Naive thymus-derived CD4-positive, alpha-beta T cell (primary cell): ENCODE measurements at regions of chr17 and their contacts with region 1.

Region 1: DNA sequence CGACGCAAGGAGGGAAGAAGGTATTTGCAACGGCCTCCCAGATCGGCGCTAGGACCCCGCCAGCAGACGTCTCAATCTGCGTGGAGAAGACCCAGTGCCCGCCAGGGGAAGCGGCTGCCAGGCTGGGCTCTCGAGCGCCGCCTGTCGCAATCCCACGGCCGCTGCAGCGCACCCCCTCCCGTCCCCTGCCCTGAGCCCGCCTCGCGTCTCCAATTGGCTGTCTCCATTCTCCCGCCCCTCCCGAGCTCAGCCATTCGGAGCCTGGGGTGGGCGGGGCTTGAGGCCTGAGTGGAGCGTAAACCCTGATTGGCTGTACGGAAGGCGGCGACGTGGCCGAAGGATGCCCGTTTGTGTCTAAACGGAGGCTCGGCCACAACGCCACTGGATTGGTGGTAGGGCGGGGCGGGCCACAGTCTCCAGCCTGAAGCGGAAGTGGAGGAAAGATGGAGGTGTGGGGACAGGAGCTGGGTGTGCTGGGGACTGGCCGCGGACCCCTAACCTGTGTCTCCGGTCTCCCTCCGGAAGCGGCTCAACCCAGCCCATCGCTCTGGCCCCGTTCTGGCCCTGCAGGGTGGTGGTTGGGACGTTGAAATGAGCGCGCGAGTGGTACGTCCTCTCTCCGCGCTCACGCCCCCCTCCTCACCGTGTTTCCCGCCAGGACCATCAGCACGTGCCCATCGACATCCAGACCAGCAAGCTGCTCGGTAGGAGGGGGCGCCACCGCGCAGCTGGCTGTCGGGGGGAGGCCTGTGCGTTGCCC is at the start of gene CDK5RAP3:
- DNase-seq: peak; percentile 93 to 99 (median 97)
- ATAC-seq: peak; percentile 100
- H3K4me3 ChIP-seq: peak within 1 kb of the TSS; percentile 96
- H3K4me3 Mint-ChIP-seq: peak within 1 kb of the TSS; percentile 95 to 100 (median 99)
- H3K27ac ChIP-seq: peak within 1 kb of the TSS; percentile 71
- H3K27ac Mint-ChIP-seq: peak within 1 kb of the TSS; percentile 83 to 96 (median 93)
- H3K4me1 ChIP-seq: peaks cover 6 to 12% of the 10 kb centered on the region in 2 donors
- H3K4me1 Mint-ChIP-seq: peaks cover 14 to 41% (median 26%) of the 10 kb centered on the region in 7 donors
- H3K27me3 ChIP-seq: no peaks in the 10 kb centered on the region
- H3K27me3 Mint-ChIP-seq: no peaks in the 10 kb centered on the region
- total RNA-seq, gene CDK5RAP3: 238 to 349 (median 276) TPM

Region 2: GRCh38 chr17:47840740-47841603 is 129.9 kb before region 1 on chr17 and contains the start of gene SCRN2:
- CTCF ChIA-PET with region 1: interaction called, 6 read pairs
- POLR2A ChIA-PET with region 1: interaction called, 4 read pairs
- intact Hi-C with region 1: loop called (anchors 1 kb)
- DNase-seq: peak; percentile 71 to 94 (median 81)
- ATAC-seq: peak; percentile 94
- H3K4me3 ChIP-seq: peak within 1 kb of the TSS; percentile 95
- H3K4me3 Mint-ChIP-seq: peak within 1 kb of the TSS; percentile 84 to 99 (median 94)
- H3K27ac ChIP-seq: peak within 1 kb of the TSS; percentile 75
- H3K27ac Mint-ChIP-seq: peak within 1 kb of the TSS; percentile 55 to 93 (median 86)
- H3K4me1 ChIP-seq: peaks cover 19 to 21% of the 10 kb centered on the region in 2 donors
- H3K4me1 Mint-ChIP-seq: peaks cover 9 to 49% (median 38%) of the 10 kb centered on the region in 7 donors
- H3K27me3 ChIP-seq: peaks cover 0 to 7% of the 10 kb centered on the region in 2 donors
- H3K27me3 Mint-ChIP-seq: peaks cover 6 to 23% (median 18%) of the 10 kb centered on the region in 5 donors
- total RNA-seq, gene SCRN2: 33.4 to 55.9 (median 41.4) TPM

Region 3: DNA sequence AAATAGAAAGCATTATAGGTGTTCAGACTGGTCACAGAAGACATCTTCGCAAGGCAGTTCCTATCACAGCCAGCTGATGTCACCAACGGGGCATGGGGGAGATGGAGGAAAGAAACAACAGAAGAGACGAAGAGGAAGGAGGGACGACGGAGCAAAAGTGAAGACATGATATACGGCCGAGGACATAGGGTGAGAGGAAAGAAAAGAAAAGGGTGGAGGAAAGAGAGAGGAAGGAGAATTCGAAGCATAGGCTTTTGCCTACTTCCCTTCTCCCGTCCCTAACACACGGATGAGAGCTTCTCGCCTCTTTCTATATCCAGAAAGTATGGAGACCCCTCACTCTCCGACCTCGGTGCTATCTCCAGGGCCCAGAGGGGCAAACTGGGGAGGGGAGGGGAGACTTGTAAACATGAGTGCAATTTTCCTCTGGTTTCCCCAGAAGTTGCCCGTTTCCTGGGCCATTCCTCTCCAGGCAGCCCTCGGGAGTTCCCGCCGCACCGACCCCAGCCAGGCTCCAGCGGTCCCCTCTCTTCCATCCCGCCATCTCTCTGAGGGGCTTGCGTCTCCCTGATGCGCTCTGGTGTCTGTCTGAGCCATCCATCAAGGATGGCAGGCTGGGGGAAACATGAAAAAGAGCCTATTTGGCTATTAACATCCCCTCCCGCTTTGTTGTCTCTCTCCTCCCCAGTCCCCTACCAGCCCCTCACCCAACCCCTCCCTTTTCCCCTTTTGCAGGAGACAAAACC is 40.7 kb after region 1 on chr17:
- CTCF ChIA-PET with region 1: interaction called, 6 read pairs
- POLR2A ChIA-PET with region 1: no interaction called
- intact Hi-C with region 1: loop called in 1 of 2 experiments (anchors 5 kb)
- DNase-seq: peak in 7 of 9 donors; percentile 20 to 34 (median 32)
- ATAC-seq: peak; percentile 74
- H3K4me3 ChIP-seq: peak overlapping the region; percentile 47
- H3K4me3 Mint-ChIP-seq: peak overlapping the region; percentile 70 to 90 (median 78)
- H3K27ac ChIP-seq: no peak overlapping the region
- H3K27ac Mint-ChIP-seq: peak overlapping the region in 1 of 9 donors; percentile 48
- H3K4me1 ChIP-seq: peaks cover 9% of the 10 kb centered on the region in 2 donors
- H3K4me1 Mint-ChIP-seq: peaks cover 9 to 25% (median 13%) of the 10 kb centered on the region in 7 donors
- H3K27me3 ChIP-seq: peaks cover 7 to 10% of the 10 kb centered on the region in 2 donors
- H3K27me3 Mint-ChIP-seq: peaks cover 44 to 66% (median 55%) of the 10 kb centered on the region in 5 donors

Region 4: DNA sequence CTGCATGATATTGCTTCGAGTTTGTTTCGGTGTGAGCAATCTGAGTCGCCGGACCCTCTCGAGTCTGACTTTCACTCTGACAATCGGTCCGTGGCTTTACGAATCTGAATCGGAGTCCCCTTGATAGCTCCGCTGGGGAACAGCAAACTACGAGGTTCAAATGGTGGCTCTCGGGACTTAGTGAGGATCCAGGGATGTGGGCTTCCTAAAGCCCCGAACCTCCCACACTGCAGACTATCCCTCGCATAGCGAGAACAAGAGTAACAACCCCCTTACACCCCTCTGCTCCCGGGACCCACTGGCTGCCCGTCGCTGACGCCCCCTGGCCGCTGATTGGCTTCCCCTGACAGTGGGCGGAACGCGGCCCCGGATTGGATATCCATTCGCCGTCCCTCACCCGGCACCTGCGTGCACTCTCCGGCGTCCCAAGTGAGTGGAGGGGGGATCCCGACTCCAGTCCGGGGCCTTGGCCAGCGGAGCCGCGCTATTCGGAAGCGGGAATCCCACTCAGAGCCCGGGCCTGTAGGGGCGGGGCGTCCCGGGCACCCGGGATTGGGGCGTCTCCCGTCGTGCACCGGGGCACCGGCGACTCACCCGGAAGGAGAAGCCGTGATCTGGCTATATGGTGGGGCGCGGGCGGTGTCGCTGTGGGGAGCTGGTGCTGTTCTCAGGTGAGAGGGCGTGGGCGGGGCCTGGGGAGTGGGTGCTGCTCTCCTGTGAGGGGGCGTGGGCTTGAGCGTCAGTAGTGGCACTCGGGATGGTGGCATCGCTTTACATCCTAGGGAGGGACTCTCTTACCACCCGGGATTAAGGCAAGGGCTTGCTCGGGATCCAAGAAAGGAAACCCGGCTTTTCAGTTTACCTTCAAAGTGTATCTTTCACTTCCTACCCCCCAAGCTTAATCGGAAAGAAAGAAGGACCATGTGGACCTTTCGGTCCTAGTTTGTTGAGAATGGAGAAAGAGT is 136.6 kb after region 1 on chr17 and contains the start of gene SNX11:
- CTCF ChIA-PET with region 1: no interaction called
- POLR2A ChIA-PET with region 1: no interaction called
- intact Hi-C with region 1: loop called in 1 of 2 experiments (anchors 2 kb)
- DNase-seq: peak; percentile 85 to 97 (median 94)
- ATAC-seq: peak; percentile 96
- H3K4me3 ChIP-seq: peak within 1 kb of the TSS; percentile 97
- H3K4me3 Mint-ChIP-seq: peak within 1 kb of the TSS; percentile 92 to 99 (median 96)
- H3K27ac ChIP-seq: peak within 1 kb of the TSS; percentile 89
- H3K27ac Mint-ChIP-seq: peak within 1 kb of the TSS; percentile 89 to 96 (median 93)
- H3K4me1 ChIP-seq: peaks cover 19 to 20% of the 10 kb centered on the region in 2 donors
- H3K4me1 Mint-ChIP-seq: peaks cover 45 to 68% (median 62%) of the 10 kb centered on the region in 7 donors
- H3K27me3 ChIP-seq: no peaks in the 10 kb centered on the region
- H3K27me3 Mint-ChIP-seq: no peaks in the 10 kb centered on the region
- total RNA-seq, gene SNX11: 12.3 to 35.1 (median 16.7) TPM

Region 5: DNA sequence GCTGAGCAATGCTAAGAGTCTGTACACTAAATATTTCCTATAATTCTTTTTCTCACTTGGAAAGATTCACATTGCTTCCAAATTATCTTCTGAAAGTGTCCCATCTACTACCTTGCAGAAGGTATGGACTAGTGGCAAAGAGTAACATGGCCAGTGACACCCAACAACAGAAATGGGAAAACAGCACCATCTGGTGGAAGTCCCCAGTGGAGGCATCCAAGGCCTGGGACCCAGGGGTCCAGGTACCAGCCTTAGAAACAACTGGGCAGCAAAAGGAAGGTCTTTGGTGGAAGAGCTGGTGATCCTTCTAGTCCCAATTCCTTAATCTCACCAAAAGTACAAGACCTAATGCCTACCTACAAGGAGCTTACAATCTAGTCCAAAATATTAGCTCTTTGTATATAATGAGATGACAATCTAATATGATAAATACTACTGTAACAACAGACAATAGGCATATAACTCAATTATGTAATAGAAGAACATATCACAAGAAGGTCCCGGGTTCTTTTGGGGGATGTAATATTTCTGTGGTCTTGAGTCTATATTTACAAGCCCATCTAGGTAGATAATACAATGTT is 403.9 kb after region 1 on chr17:
- CTCF ChIA-PET with region 1: no interaction called
- POLR2A ChIA-PET with region 1: no interaction called
- intact Hi-C with region 1: no loop called
- DNase-seq: peak in 5 of 9 donors; percentile 7 to 21 (median 13)
- ATAC-seq: peak; percentile 68
- H3K4me3 ChIP-seq: no peak overlapping the region
- H3K4me3 Mint-ChIP-seq: no peak overlapping the region
- H3K27ac ChIP-seq: no peak overlapping the region
- H3K27ac Mint-ChIP-seq: peak overlapping the region in 2 of 9 donors; percentile 47 to 50
- H3K4me1 ChIP-seq: peaks cover 6 to 17% of the 10 kb centered on the region in 2 donors
- H3K4me1 Mint-ChIP-seq: peaks cover 18 to 44% (median 36%) of the 10 kb centered on the region in 7 donors
- H3K27me3 ChIP-seq: no peaks in the 10 kb centered on the region
- H3K27me3 Mint-ChIP-seq: no peaks in the 10 kb centered on the region